ENCODE measurements at regions of chr6 and their contacts with region 1.

Region 1: DNA sequence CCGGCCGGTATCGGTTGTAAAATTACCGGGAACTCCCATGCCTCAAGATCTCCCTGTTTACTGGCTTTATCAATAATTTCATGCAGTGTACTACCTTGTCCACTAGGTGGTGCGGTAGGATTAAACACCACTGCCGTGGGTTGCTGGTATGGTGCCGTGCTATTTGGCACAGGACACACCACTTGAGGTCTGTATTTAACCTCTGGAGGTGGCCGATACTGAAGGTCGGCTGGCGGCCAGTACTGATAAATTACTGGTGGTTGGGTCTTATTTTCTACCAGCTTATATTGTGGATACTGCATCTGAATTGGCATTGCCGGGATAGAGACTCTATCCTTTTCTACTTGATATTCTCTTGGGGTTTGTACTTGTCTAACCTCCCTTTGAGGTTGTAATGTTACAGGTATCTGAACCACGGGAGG is 14.3 kb upstream of the PTCRA start:
- DNase-seq: peak; percentile 72
- H3K4me3 Mint-ChIP-seq: no peak overlapping the region
- H3K27ac Mint-ChIP-seq: no peak overlapping the region
- H3K4me1 Mint-ChIP-seq: peaks cover 19% of the 10 kb centered on the region
- H3K27me3 Mint-ChIP-seq: no peaks in the 10 kb centered on the region

Region 2: DNA sequence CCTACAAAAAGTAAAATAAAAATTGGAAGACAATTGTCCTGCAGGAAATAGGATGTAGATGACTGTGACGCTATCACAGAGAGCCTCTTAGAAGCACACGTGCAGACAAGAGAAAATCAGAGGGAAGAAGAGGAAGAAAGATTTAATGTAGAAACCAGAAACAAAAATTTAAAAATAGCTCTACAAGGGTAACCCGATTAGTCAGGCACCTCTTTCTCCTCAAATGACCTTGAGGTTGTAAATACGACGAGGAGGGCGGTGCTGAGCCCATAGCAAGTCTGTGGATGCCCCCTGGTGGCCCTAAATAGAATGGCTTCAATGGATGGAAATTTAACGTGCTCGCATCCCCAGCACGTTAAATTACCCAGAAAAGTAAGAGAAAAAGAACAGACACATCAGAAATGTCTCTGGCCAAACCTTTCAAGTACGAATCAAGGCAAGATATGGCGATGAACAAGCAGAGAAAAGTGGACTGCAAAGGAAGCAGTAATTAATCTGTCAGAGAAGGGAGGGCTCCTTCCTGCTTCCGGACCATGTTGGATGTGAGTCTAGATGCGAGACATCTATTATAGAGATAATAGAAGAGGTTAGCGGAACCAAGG is 175.0 kb before region 1 on chr6:
- intact Hi-C with region 1: loop called (anchors 1 kb)
- DNase-seq: peak; percentile 59
- H3K4me3 Mint-ChIP-seq: peak overlapping the region; percentile 75
- H3K27ac Mint-ChIP-seq: peak overlapping the region; percentile 98
- H3K4me1 Mint-ChIP-seq: peaks cover 19% of the 10 kb centered on the region
- H3K27me3 Mint-ChIP-seq: peaks cover 5% of the 10 kb centered on the region

Region 3: DNA sequence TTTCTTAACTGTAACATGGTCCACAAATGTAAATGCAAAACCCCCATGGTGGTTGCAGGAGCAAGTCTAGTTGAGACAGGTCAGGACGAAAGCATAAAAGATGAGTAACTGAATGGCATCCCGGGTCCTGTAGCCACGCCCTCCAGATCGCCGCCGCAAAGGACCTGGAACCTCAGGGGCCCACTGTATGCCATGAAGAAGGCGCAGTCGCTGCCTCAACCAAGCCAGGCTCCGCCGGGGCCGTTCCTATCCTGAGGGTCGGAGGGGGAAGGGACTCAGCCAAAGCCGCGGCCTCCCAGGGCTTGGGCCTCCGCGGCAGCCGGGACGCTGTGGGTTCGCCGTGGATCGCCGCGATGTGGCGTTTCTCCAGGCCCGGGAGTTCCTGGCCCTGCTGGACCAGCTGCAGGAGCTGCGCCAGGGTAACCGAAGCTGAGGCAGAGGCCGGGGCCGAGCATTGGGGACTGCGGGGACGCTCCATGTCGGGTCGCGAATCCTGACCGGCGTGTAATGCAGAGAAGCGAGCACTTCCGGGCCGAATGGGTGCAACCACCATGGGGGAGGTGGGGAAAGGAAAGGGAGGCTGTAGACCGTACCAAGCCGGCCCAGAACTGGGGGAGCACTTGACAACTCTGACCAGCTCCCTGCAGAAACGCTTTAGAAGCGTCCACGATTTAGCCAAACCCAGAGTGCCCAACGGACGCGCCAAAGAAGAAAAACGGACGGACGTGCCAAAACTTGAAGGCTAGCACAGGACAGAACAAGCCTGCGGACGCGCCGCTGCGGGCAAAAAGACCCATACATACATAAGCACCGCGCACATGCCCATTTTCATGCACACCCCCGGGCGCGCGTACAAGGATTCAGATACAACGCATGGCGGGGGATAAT is 11.0 kb before region 1 on chr6:
- intact Hi-C with region 1: loop called (anchors 1 kb)
- DNase-seq: peak; percentile 86
- H3K4me3 Mint-ChIP-seq: peak overlapping the region; percentile 84
- H3K27ac Mint-ChIP-seq: peak overlapping the region; percentile 89
- H3K4me1 Mint-ChIP-seq: peaks cover 12% of the 10 kb centered on the region
- H3K27me3 Mint-ChIP-seq: no peaks in the 10 kb centered on the region

Region 4: DNA sequence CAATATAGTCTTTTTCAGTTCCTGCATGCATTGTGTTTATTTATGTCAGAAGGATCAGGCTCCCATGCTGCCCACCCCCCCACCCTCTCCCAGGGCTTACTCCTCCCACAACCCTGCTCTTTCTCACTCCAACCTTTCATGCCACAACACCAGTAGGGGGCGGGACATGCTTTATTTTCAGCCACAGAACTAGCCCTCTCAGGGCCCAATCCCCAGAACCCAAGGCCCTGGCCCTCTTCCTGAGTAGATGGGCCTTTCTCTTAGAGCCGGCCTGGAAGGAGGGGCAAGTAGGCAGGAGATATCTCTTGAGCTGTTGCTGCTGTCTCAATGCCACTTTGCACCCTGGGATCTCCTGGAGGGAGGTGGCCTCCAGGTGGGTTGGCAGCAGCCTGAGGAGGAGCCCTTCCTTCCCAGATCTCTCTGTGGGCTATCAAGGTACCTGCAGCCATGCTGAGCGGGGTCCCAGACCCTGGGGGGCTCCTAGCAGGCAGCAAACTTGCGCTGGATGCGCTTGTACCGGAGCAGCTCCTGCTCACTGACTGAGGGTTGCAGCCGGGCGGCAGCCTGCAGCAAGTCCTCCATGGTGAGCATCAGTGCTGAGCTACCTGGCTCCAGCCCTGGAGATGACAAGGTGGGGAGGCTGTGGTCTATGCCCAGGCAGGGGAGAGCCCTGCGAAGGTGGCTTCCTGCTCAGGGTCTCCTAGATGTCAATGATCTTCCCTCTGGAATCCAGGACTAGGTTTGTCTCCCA is 62.5 kb after region 1 on chr6:
- intact Hi-C with region 1: loop called (anchors 5 kb)
- DNase-seq: no peak
- H3K4me3 Mint-ChIP-seq: no peak overlapping the region
- H3K27ac Mint-ChIP-seq: no peak overlapping the region
- H3K4me1 Mint-ChIP-seq: peaks cover 18% of the 10 kb centered on the region
- H3K27me3 Mint-ChIP-seq: peaks cover 18% of the 10 kb centered on the region

Region 5: DNA sequence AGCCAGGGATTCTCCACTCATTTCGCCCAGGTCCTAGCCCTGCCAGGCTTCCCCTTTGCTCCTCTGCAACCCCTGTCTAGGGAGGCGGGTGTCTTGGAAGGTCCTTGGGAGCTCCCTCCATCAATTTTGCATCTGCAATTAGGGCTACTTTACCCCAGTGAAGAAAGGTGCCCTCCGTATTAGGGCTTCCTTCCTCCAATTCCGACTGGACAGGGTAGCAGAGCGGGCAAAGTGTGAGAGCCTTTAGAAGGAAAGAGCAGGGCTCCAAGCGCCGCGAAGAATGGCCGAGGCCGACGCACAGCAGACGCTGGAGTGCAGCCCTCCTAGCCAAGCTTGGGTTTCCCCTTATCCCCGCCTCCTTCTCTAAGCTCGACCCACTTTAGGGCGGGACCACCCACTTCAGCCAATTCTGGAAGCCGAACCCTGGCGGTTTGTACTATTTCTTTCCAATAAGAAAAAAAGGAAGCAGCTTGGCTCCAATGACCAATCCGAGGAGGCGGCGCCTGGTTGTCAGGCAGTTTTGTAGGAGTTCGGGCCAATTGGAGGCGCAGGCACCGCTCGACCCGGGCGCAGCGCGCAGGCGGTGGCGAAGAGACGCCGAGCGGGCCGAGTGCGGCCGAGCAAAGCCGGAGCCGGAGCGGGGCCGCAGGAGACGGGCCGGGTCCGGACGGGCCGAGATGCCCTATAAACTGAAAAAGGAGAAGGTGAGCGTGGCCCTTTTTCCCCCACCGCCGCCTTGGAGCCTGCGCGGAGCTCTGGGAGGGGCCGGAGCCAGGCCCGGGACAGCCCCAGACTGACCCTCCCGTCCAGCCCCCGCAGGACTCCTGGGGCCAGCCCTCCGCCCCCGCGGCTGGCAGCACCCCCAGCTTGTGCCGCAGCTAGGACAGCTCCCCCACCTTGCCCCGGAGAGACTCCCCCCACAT is 82.7 kb after region 1 on chr6 and contains the start of gene PPP2R5D:
- intact Hi-C with region 1: loop called (anchors 1 kb)
- DNase-seq: peak; percentile 97
- H3K4me3 Mint-ChIP-seq: peak within 1 kb of the TSS; percentile 92
- H3K27ac Mint-ChIP-seq: peak within 1 kb of the TSS; percentile 94
- H3K4me1 Mint-ChIP-seq: peaks cover 57% of the 10 kb centered on the region
- H3K27me3 Mint-ChIP-seq: no peaks in the 10 kb centered on the region
- total RNA-seq, gene PPP2R5D: 52.1 and 53.4 TPM in 2 replicates

Region 6: DNA sequence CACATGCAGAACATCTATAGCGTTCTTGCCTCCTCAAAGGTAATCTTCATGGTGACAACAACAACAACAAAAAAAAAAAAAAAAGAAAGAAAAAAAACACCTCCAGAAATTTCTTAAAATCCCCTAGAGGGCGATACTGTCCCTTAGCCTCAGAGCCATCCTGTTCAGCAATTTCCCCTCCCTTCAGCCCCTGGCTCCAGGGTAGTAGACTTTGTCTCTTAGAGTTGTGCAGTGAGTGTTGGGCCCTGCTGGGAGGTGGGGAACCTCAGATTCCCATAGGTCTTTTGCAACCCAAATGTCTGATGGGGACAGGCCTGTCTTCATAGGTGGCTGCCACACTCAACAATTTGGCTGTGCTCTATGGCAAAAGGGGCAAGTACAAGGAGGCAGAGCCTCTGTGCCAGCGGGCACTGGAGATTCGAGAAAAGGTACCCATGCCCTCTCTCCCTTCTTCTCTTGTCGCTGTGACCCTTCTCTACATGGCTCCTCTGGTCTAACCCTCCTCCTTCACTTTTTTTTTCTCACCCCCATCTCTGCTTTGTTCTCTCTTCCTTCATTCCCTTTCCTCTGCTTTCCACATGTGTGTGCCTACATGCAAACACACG is 168.6 kb after region 1 on chr6:
- intact Hi-C with region 1: loop called (anchors 1 kb)
- DNase-seq: no peak
- H3K4me3 Mint-ChIP-seq: no peak overlapping the region
- H3K27ac Mint-ChIP-seq: no peak overlapping the region
- H3K4me1 Mint-ChIP-seq: peaks cover 6% of the 10 kb centered on the region
- H3K27me3 Mint-ChIP-seq: no peaks in the 10 kb centered on the region

Measured in activated T-helper 1 cell treated with anti-CD3 and anti-CD28 coated beads, Interleukin-12 subunit alpha, Interleukin-12 subunit beta, Interleukin-2, Interleukin-4 antibody, amounts not matched to agents 30 ng/mL and 10 ng/mL and 1 ng/mL, durations not matched to agents 14 hours and 24 hours and 36 hours (primary cell).